Head of caudate nucleus (tissue), 42 donors: ENCODE measurements at regions of chr7 and their contacts with region 1.

Region 1: DNA sequence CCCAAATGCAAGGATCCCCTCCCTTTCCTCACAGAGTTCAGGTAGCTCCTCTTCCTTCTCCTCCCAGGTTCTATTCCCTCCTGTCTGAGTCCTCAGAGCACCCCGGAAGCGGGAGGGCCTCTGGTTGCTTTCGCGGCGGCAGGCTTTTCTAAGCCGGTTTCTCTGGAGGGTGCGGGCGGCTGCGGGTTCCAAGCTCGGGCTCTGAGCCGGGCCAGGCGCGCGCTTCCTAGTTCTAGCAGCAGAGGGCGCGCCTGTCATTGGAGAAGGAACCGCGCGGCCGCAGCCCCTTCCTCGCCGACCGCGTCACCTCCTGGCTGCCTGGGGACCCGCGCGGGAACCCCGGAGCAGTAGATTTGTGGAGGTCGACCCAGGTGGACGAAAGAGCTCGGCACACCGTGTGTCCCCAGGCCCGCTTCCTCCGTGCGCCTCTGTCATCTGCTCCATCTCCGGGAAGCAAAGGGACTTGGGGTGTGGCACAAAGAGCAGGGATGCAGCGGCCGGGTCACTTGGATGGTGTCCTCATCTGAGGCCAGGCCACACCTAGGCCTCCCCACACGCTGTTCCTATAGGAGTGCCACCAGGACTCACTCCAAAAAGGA is 389.0 kb upstream of the PODXL start:
- DNase-seq: peak; percentile 16 to 86 (median 70)

Region 2: GRCh38 chr7:132154248-132154647 is 208.8 kb after region 1 on chr7:
- intact Hi-C with region 1: loop called (anchors 10 kb)
- DNase-seq: no peak

Region 3: GRCh38 chr7:132250883-132251653 is 305.7 kb after region 1 on chr7:
- intact Hi-C with region 1: loop called (anchors 5 kb)
- DNase-seq: peak; percentile 54 to 91 (median 81)

Region 4: DNA sequence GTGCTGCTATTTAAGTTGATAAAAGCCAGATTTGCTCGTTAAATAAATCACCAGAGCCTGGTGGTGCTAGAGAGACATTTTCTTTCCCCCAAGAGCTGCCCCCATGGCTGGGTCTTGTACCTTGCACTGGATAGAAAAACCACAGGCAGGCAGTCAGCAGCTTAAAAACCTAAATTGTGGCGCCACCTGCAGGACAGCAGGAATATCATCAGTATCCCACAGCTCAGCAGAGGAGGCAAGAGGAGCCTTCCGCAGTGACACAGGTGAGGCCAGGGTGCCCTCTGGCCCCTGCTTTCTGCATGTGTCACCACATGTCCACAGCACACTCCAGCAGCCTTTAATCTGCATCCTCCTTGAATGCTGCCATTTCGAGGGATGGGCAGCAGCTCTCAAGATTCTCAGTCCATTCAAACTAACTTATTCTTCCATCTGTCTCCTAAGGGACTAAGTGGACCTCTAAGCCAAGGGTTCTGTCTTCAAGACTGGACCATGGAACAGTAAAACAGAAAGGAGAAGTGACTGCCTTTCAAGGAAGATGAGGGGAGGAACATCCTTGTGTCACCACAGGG is 635.4 kb after region 1 on chr7:
- intact Hi-C with region 1: loop called (anchors 10 kb)
- DNase-seq: peak; percentile 56 to 92 (median 80)

Region 5: GRCh38 chr7:133452577-133452976 is 1507.2 kb after region 1 on chr7:
- intact Hi-C with region 1: no loop called
- DNase-seq: no peak